AG04450 (cell line): ENCODE measurements at regions of chr5 and their contacts with region 1.

Region 1: DNA sequence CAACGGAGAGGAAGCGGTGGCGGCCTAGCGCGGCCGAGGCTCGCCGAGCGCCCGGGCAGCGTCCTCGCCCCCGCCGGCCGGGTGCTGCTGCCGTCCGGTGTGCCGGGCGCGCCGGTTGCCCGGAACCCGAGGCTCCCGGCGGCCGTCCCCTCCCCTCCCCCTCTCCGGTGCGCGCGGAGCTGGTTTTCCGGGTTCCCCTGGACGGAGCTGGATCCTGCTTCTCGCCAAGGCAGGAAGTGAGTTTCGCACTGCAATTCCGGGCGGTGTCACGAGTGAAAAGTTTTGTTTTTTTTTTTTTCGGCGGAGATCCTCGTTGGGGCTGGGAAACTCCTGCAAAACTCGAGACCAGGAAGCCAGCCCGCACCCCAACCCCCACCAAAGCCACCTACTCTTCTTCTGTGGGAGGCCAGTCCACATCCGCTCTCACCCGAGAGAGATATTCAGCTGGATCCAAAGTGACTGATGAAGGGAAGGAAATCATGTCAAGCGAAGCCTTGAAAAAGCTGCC is at the start of gene ERBIN:
- DNase-seq: peak; percentile 60
- H3K4me3 ChIP-seq: peak within 1 kb of the TSS; percentile 85
- H3K27ac ChIP-seq: peak within 1 kb of the TSS; percentile 98
- H3K27me3 ChIP-seq: no peaks in the 10 kb centered on the region
- CTCF ChIP-seq: no peak
- polyA plus RNA-seq, gene ERBIN: 43.4 and 64.8 TPM in 2 replicates

Region 2: GRCh38 chr5:65776441-65777141 is 149.7 kb before region 1 on chr5:
- CTCF ChIA-PET with region 1: no interaction called
- POLR2A ChIA-PET with region 1: no interaction called
- DNase-seq: no peak
- H3K4me3 ChIP-seq: no peak overlapping the region
- H3K27ac ChIP-seq: no peak overlapping the region
- H3K27me3 ChIP-seq: no peaks in the 10 kb centered on the region
- CTCF ChIP-seq: no peak

Region 3: DNA sequence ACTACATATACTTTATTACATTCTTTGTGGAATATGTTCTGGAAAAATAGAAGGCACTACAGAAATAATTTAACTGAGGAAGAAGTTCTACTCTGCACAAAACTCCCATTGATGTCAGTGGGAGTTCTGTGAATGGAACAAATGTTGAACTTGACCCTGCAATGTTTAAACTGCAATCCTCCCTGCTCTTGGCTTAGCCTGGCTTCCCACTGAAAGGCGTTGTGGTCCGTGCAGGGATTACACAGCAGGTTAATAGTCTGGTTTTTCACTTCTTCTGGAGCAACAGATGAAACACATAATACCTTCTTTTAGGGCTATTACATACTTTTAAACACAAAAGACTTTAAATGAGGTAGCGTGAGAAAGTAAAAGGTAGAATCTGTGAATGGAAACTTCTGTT is 12.8 kb before region 1 on chr5:
- CTCF ChIA-PET with region 1: no interaction called
- POLR2A ChIA-PET with region 1: interaction called, 10 read pairs
- DNase-seq: no peak
- H3K4me3 ChIP-seq: no peak overlapping the region
- H3K27ac ChIP-seq: no peak overlapping the region
- H3K27me3 ChIP-seq: no peaks in the 10 kb centered on the region
- CTCF ChIP-seq: no peak

Region 4: GRCh38 chr5:66002415-66002814 is 76.1 kb after region 1 on chr5:
- CTCF ChIA-PET with region 1: no interaction called
- POLR2A ChIA-PET with region 1: interaction called, 11 read pairs
- DNase-seq: no peak
- H3K4me3 ChIP-seq: no peak overlapping the region
- H3K27ac ChIP-seq: no peak overlapping the region
- H3K27me3 ChIP-seq: no peaks in the 10 kb centered on the region
- CTCF ChIP-seq: no peak

Region 5: GRCh38 chr5:66057239-66057638 is 130.9 kb after region 1 on chr5:
- CTCF ChIA-PET with region 1: no interaction called
- POLR2A ChIA-PET with region 1: interaction called, 10 read pairs
- DNase-seq: no peak
- H3K4me3 ChIP-seq: no peak overlapping the region
- H3K27ac ChIP-seq: no peak overlapping the region
- H3K27me3 ChIP-seq: no peaks in the 10 kb centered on the region
- CTCF ChIP-seq: no peak